ENCODE measurements at regions of chr6 and their contacts with region 1.

Region 1: DNA sequence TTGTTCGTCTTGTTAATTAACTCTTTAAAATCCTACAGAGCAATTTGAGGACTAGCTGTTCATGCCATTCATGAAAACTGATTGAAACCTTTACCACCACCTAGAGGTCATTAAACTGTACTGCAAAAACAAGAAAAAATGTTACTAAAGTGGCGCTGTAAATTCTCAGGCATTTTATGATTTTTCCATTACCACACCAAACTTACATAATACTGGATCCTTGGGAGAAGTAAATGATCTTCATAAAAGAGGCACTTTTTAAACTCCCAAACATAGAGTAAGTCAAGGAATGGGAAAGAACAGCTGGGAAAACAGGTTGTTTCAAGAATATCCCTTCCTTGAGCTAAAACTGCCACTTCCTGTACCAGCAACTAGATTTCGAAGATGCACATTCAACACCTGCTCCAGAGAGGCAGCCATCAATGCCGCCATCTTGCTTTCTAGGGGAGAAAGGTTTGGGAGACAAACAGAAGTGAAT is 54.3 kb downstream of the MYLIP start:
- DNase-seq: no peak
- ATAC-seq: peak in 1 of 2 donors; percentile 60
- H3K4me3 ChIP-seq: peak overlapping the region in 1 of 4 donors; percentile 27
- H3K27ac ChIP-seq: peak overlapping the region in 2 of 4 donors; percentile 2 to 38
- H3K4me1 ChIP-seq: peaks cover 4 to 10% of the 10 kb centered on the region in 2 donors
- H3K27me3 ChIP-seq: no peaks in the 10 kb centered on the region
- CTCF ChIP-seq: peak; percentile 61 to 82 (median 70)
- POLR2A ChIP-seq: no peak

Region 2: DNA sequence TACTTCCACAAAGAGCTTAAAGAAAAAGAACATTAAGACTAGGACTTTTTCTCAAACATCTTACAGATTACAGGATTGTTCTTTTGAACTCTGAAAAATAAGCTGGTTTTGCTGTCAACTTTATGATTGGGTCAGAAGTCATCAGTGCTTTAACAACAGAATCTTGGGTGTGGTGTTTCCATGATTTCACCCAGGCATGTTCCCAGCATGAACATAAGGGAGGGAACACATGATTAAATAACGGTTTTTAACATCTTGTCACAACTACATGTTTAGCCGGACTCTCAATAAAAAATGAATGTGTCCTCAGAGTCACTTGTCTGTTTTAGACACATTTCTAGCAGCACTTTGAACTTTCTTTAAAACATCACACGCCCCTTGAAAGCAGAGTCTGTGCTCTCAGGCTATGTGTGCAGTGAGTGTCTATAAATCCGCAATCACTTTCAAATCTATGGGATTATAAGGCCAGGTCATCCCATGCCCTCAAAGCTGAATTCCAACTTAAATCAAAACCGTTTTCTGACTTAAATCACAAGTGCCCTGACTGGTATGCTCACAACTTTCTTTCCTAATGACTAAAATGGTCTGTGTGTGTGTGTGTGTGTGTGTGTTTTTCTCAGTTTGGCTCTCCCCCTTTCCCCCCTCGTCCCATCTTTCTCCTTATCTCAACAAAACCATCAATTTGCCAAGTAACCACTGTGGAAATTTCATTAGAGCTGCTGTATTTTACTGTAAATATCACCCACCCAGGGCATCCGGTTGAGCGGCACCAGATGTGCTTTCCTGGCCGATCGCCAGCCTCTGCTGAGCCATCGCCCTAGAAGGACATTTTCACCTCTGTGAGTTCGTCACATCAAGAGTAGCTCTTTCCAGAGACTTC is 303.6 kb before region 1 on chr6:
- in situ Hi-C with region 1: loop called in 1 of 4 experiments (anchors 25 kb)
- intact Hi-C with region 1: no loop called
- DNase-seq: peak; percentile 41 to 43
- ATAC-seq: no peak
- H3K4me3 ChIP-seq: no peak overlapping the region
- H3K27ac ChIP-seq: no peak overlapping the region
- H3K4me1 ChIP-seq: peaks cover 4 to 12% of the 10 kb centered on the region in 2 donors
- H3K27me3 ChIP-seq: no peaks in the 10 kb centered on the region
- CTCF ChIP-seq: no peak
- POLR2A ChIP-seq: no peak

Region 3: GRCh38 chr6:15987569-15987968 is 195.7 kb before region 1 on chr6:
- in situ Hi-C with region 1: loop called in 1 of 4 experiments (anchors 25 kb)
- intact Hi-C with region 1: no loop called
- DNase-seq: no peak
- ATAC-seq: no peak
- H3K4me3 ChIP-seq: no peak overlapping the region
- H3K27ac ChIP-seq: no peak overlapping the region
- H3K4me1 ChIP-seq: no peaks in the 10 kb centered on the region
- H3K27me3 ChIP-seq: no peaks in the 10 kb centered on the region
- CTCF ChIP-seq: no peak
- POLR2A ChIP-seq: no peak

Region 4: GRCh38 chr6:16206595-16207037 is 23.4 kb after region 1 on chr6:
- in situ Hi-C with region 1: no loop called
- intact Hi-C with region 1: loop called (anchors 2 kb)
- DNase-seq: peak; percentile 23 to 45
- ATAC-seq: peak; percentile 87 to 90
- H3K4me3 ChIP-seq: no peak overlapping the region
- H3K27ac ChIP-seq: no peak overlapping the region
- H3K4me1 ChIP-seq: no peaks in the 10 kb centered on the region
- H3K27me3 ChIP-seq: no peaks in the 10 kb centered on the region
- CTCF ChIP-seq: peak; percentile 90 to 97 (median 93)
- POLR2A ChIP-seq: no peak

Measured in gastrocnemius medialis (tissue), 4 donors.